Naive thymus-derived CD8-positive, alpha-beta T cell (primary cell): ENCODE measurements at regions of chr12 and their contacts with region 1.

Region 1: GRCh38 chr12:132828706-132829534 is at the start of gene GOLGA3:
- DNase-seq: peak; percentile 92 to 97 (median 96)
- ATAC-seq: peak; percentile 88 to 93
- H3K4me3 Mint-ChIP-seq: peak within 1 kb of the TSS; percentile 94 to 99 (median 96)
- H3K27ac Mint-ChIP-seq: peak within 1 kb of the TSS; percentile 99 to 100 (median 100)
- H3K4me1 Mint-ChIP-seq: peaks cover 24 to 73% (median 62%) of the 10 kb centered on the region in 4 donors
- H3K27me3 Mint-ChIP-seq: peaks cover 0 to 3% (median 0%) of the 10 kb centered on the region in 5 donors
- polyA plus RNA-seq, gene GOLGA3: 2.7 to 18.1 (median 12.2) TPM

Region 2: GRCh38 chr12:132847363-132848356 is 18.7 kb after region 1 on chr12:
- POLR2A ChIA-PET with region 1: interaction called, 45 read pairs
- DNase-seq: peak; percentile 16 to 82 (median 60)
- ATAC-seq: peak; percentile 96 to 99
- H3K4me3 Mint-ChIP-seq: peak overlapping the region; percentile 32 to 81 (median 70)
- H3K27ac Mint-ChIP-seq: peak overlapping the region; percentile 86 to 97 (median 94)
- H3K4me1 Mint-ChIP-seq: peaks cover 10 to 32% (median 21%) of the 10 kb centered on the region in 4 donors
- H3K27me3 Mint-ChIP-seq: no peaks in the 10 kb centered on the region

Region 3: GRCh38 chr12:132872975-132873421 is 44.1 kb after region 1 on chr12:
- POLR2A ChIA-PET with region 1: interaction called, 36 read pairs
- DNase-seq: peak in 8 of 10 donors; percentile 7 to 69 (median 40)
- ATAC-seq: peak; percentile 79 to 86
- H3K4me3 Mint-ChIP-seq: peak overlapping the region; percentile 64 to 83 (median 78)
- H3K27ac Mint-ChIP-seq: peak overlapping the region; percentile 34 to 96 (median 95)
- H3K4me1 Mint-ChIP-seq: peaks cover 9 to 43% (median 25%) of the 10 kb centered on the region in 4 donors
- H3K27me3 Mint-ChIP-seq: no peaks in the 10 kb centered on the region

Region 4: GRCh38 chr12:132908145-132909044 is 79.5 kb after region 1 on chr12:
- POLR2A ChIA-PET with region 1: interaction called, 48 read pairs
- DNase-seq: peak; percentile 87 to 99 (median 96)
- ATAC-seq: peak; percentile 91 to 92
- H3K4me3 Mint-ChIP-seq: peak overlapping the region; percentile 82 to 99 (median 94)
- H3K27ac Mint-ChIP-seq: peak overlapping the region; percentile 93 to 100 (median 97)
- H3K4me1 Mint-ChIP-seq: peaks cover 13 to 29% (median 22%) of the 10 kb centered on the region in 4 donors
- H3K27me3 Mint-ChIP-seq: peaks cover 0 to 3% (median 0%) of the 10 kb centered on the region in 5 donors